Pancreas (tissue), 10 donors: ENCODE measurements at regions of chr11 and their contacts with region 1.

Region 1: DNA sequence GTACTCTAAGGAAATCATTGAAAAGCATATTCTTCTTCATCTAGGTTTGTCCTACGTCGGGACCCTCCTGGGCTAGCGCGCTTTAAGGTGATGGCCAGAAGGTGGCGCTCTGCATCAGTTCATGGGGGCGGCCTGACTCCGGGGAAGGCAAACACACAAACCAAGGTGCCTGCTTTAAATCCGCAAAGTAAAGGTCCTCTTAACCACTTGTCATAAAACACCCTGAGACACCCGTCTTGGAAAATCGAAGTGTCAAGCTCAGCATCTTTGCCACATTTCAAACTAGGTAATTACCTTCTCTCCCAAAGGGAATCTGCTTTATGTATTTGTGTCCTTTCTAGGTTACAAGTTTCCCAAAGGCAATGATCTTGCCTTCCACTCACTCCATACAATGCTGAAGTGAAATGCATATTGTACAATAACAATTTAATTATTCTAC is 33.9 kb downstream of the LMO2 start:
- DNase-seq: peak; percentile 51 to 89 (median 72)
- ATAC-seq: peak; percentile 72 to 89 (median 84)
- H3K4me3 ChIP-seq: no peak overlapping the region
- H3K27ac ChIP-seq: no peak overlapping the region
- H3K4me1 ChIP-seq: peaks cover 0 to 8% (median 3%) of the 10 kb centered on the region in 3 donors
- H3K27me3 ChIP-seq: no peaks in the 10 kb centered on the region
- CTCF ChIP-seq: peak; percentile 64 to 83 (median 80)

Region 2: GRCh38 chr11:33692013-33692504 is 165.9 kb before region 1 on chr11:
- intact Hi-C with region 1: no loop called
- DNase-seq: peak in 4 of 6 donors; percentile 27 to 79 (median 65)
- ATAC-seq: peak; percentile 51 to 62 (median 58)
- H3K4me3 ChIP-seq: no peak overlapping the region
- H3K27ac ChIP-seq: peak overlapping the region; percentile 80 to 95 (median 88)
- H3K4me1 ChIP-seq: peaks cover 36 to 77% (median 45%) of the 10 kb centered on the region in 3 donors
- H3K27me3 ChIP-seq: no peaks in the 10 kb centered on the region
- CTCF ChIP-seq: no peak

Region 3: DNA sequence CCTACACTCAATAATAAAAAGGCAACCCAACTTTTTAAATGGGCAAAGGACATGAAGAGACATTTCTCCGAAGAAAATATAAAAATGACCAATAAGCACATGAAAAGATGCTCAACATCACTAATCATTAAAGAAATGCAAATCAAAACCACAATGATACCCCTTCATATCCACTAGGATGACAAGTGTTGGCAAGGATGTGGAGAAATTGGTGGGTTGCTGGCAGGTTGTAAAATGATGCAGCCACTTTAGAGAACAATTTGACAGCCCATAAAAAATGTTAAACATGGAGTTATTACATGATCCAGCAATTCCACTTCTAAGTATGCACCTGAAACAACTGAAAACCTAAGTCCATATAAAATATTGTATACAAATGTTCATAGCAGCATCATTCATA is 107.1 kb after region 1 on chr11:
- intact Hi-C with region 1: loop called (anchors 5 to 10 kb)
- DNase-seq: no peak
- ATAC-seq: no peak
- H3K4me3 ChIP-seq: no peak overlapping the region
- H3K27ac ChIP-seq: no peak overlapping the region
- H3K4me1 ChIP-seq: no peaks in the 10 kb centered on the region
- H3K27me3 ChIP-seq: no peaks in the 10 kb centered on the region
- CTCF ChIP-seq: no peak

Region 4: GRCh38 chr11:33970984-33971466 is 113.1 kb after region 1 on chr11:
- intact Hi-C with region 1: loop called (anchors 5 to 10 kb)
- DNase-seq: peak in 3 of 6 donors; percentile 19 to 38 (median 26)
- ATAC-seq: peak in 3 of 4 donors; percentile 89 to 92 (median 89)
- H3K4me3 ChIP-seq: no peak overlapping the region
- H3K27ac ChIP-seq: no peak overlapping the region
- H3K4me1 ChIP-seq: no peaks in the 10 kb centered on the region
- H3K27me3 ChIP-seq: no peaks in the 10 kb centered on the region
- CTCF ChIP-seq: peak in 3 of 4 donors; percentile 23 to 42 (median 33)

Region 5: GRCh38 chr11:34223021-34223813 is 365.3 kb after region 1 on chr11:
- intact Hi-C with region 1: no loop called
- DNase-seq: peak in 2 of 6 donors; percentile 11 to 35
- ATAC-seq: peak in 3 of 4 donors; percentile 70 to 78 (median 73)
- H3K4me3 ChIP-seq: no peak overlapping the region
- H3K27ac ChIP-seq: peak overlapping the region in 1 of 4 donors; percentile 17
- H3K4me1 ChIP-seq: no peaks in the 10 kb centered on the region
- H3K27me3 ChIP-seq: no peaks in the 10 kb centered on the region
- CTCF ChIP-seq: no peak

Region 6: DNA sequence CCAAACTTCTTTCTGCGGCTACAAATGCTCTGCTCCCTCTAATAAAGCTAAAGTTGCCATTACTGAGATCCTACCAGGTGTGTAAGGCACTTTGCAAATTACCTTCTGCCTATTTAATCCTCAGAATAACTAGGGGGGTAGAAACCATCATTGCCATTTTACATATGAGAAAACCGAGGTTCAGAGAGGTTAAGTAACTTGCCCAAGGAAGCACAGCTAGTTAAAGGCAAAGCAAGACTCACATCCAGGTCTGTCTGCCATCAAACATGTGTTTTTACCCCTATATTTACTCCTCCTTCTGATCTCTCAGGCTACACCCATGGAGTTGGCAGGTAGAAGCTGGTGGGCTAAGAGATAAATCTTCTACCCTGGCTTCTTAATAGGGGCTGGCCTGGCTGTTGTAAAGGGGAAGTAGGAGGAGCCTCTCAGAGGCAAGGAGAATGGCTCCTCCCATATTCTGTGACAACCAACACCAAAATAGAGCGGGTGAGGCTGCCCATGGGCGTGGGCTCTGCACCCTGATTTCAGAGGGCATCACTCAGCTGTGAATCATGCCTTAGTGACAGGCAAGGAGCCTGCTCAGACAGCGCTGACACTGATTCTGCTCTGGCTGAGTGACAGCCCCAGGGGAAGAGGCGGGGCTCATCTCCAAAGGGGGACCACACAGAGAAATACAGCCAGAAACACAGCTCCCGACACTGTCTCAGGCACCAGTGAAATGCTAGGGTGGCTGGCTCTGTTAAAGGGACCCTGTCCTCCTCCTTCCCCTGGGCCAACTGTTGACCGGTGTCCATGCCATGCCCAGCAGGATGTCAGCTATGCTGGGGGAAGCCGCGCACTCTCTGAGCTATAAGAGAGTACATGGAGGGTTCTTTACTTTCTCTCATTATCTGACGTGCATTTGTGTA is 393.0 kb after region 1 on chr11:
- intact Hi-C with region 1: no loop called
- DNase-seq: no peak
- ATAC-seq: peak in 3 of 4 donors; percentile 31 to 52 (median 36)
- H3K4me3 ChIP-seq: no peak overlapping the region
- H3K27ac ChIP-seq: no peak overlapping the region
- H3K4me1 ChIP-seq: peaks cover 0 to 10% (median 0%) of the 10 kb centered on the region in 3 donors
- H3K27me3 ChIP-seq: no peaks in the 10 kb centered on the region
- CTCF ChIP-seq: no peak